Activated CD8-positive, alpha-beta T cell treated with anti-CD3 and anti-CD28 coated beads, Interleukin-2, amount 10 ng/mL, durations not matched to agents 7 days and 5 days (primary cell): ENCODE measurements at regions of chr11 and their contacts with region 1.

Region 1: DNA sequence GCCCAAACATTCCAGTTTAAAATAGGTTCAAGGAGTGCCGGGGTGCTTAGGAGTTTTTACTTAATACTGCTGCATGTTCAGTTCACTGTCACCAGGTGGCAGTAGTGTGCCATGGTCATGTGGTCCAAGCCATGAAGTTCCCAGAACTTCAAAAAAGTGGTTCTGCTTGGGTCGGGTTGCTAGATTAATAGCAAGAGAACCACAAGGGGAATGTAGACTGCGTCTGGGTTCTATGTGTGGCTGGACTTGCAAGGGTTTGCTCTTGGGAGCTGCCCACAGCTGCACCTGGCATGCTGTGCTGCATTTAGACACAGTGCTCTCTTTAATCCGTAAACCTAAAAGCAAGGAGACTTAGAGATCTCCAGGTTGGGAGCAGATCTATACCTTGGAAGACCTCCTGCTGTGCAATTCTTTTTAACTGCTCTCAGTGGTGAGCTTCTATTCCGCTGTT is 6.5 kb upstream of the SPON1 start:
- DNase-seq: peak; percentile 69
- ATAC-seq: peak; percentile 58
- H3K4me3 Mint-ChIP-seq: no peak overlapping the region
- H3K27ac Mint-ChIP-seq: no peak overlapping the region
- H3K4me1 Mint-ChIP-seq: no peaks in the 10 kb centered on the region
- H3K27me3 Mint-ChIP-seq: peaks cover 30% of the 10 kb centered on the region

Region 2: DNA sequence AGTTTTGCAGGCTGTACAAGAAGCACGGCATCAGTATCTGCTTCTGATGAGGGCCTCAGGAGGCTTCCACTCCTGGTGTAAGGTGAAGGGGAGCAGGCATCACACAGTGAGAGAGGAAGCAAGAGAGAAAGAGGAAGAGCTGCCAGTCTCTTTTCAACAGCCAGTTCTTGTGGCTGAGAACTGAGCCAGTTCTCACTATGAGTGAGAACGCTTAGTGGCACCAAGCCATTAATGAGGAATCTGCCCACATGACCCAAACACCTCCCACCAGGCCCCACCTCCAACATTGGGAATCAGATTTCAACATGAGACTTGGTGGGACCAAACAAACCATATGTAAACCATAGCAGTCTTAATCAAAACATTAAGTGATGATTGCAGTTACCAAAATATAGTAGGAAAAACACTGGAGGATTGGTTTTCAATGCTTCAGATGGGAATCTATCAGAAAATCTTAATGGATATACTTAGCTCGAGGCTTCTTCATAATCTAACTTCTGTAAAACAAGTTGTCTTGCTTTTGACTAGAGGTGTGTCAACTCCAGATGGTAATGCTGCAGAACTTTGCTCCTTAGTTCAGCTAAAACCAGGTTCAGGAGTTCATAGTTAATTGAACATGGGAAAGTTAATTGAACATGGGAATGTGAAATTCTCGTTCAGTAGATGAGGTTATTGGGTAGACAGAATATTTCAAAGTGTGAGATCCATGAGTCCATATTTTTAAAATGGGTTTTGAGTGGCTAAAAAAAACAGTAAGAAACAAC is 275.3 kb before region 1 on chr11:
- CTCF ChIA-PET with region 1: no interaction called
- POLR2A ChIA-PET with region 1: no interaction called
- DNase-seq: no peak
- ATAC-seq: no peak
- H3K4me3 Mint-ChIP-seq: no peak overlapping the region
- H3K27ac Mint-ChIP-seq: peak overlapping the region; percentile 12
- H3K4me1 Mint-ChIP-seq: peaks cover 18% of the 10 kb centered on the region
- H3K27me3 Mint-ChIP-seq: no peaks in the 10 kb centered on the region

Region 3: DNA sequence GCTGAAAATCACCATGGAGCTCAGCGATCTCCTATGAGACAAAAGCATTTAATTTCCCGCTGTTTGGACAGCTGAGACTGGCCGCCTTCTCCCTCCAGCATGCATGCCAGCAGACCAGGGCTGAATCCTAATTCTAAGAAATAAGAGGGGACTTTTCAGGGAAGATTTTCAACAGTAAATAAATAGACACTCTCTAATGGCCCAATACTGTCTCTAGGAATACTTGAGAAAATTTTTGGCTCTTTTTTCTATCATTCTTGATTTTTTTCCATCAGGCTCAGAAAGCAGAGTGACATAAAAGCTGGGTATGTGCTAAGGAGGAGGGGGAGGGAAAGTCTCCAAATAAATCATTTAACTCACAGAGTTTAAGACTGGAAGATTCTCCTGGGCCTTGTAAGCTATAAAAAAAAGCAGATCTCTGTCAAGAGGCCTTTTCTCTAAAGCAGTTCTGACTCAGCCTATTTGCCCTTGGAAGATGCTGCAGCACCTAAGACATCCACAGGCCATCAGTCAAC is 11.0 kb before region 1 on chr11:
- CTCF ChIA-PET with region 1: interaction called, 42 read pairs
- POLR2A ChIA-PET with region 1: interaction called, 3 read pairs
- DNase-seq: no peak
- ATAC-seq: no peak
- H3K4me3 Mint-ChIP-seq: no peak overlapping the region
- H3K27ac Mint-ChIP-seq: no peak overlapping the region
- H3K4me1 Mint-ChIP-seq: peaks cover 45% of the 10 kb centered on the region
- H3K27me3 Mint-ChIP-seq: peaks cover 12% of the 10 kb centered on the region

Region 4: DNA sequence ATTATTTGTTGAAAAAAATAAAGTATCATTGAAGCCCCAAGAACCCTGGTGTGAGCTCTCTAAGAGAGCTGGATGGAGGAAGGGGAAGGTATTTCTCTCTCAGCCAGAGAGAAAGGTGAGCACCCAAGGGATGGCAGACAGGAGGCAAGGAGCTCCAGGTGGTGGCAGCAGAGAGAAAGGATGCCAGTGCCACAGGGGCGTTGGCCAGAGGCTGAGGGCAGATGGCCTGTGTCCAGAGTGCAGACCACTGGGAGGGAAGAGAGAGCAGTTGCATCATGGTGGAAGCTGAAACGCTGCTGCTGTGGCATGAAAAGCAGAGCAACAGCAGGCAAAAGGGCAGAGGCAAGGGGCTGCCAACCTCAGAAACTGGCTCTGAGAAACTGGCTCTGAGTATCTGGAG is 15.0 kb after region 1 on chr11:
- CTCF ChIA-PET with region 1: interaction called, 11 read pairs
- POLR2A ChIA-PET with region 1: no interaction called
- DNase-seq: no peak
- ATAC-seq: no peak
- H3K4me3 Mint-ChIP-seq: no peak overlapping the region
- H3K27ac Mint-ChIP-seq: no peak overlapping the region
- H3K4me1 Mint-ChIP-seq: peaks cover 13% of the 10 kb centered on the region
- H3K27me3 Mint-ChIP-seq: peaks cover 25% of the 10 kb centered on the region

Region 5: GRCh38 chr11:14148653-14149273 is 192.8 kb after region 1 on chr11:
- CTCF ChIA-PET with region 1: interaction called, 60 read pairs
- POLR2A ChIA-PET with region 1: no interaction called
- DNase-seq: no peak
- ATAC-seq: peak; percentile 79
- H3K4me3 Mint-ChIP-seq: no peak overlapping the region
- H3K27ac Mint-ChIP-seq: no peak overlapping the region
- H3K4me1 Mint-ChIP-seq: no peaks in the 10 kb centered on the region
- H3K27me3 Mint-ChIP-seq: peaks cover 2% of the 10 kb centered on the region

Region 6: GRCh38 chr11:14249121-14249963 is 293.3 kb after region 1 on chr11:
- CTCF ChIA-PET with region 1: interaction called, 52 read pairs
- POLR2A ChIA-PET with region 1: no interaction called
- DNase-seq: peak; percentile 81
- ATAC-seq: peak; percentile 61
- H3K4me3 Mint-ChIP-seq: peak overlapping the region; percentile 45
- H3K27ac Mint-ChIP-seq: no peak overlapping the region
- H3K4me1 Mint-ChIP-seq: peaks cover 24% of the 10 kb centered on the region
- H3K27me3 Mint-ChIP-seq: peaks cover 8% of the 10 kb centered on the region

Region 7: GRCh38 chr11:14393889-14394288 is 437.9 kb after region 1 on chr11:
- CTCF ChIA-PET with region 1: no interaction called
- POLR2A ChIA-PET with region 1: no interaction called
- DNase-seq: no peak
- ATAC-seq: no peak
- H3K4me3 Mint-ChIP-seq: no peak overlapping the region
- H3K27ac Mint-ChIP-seq: no peak overlapping the region
- H3K4me1 Mint-ChIP-seq: peaks cover 10% of the 10 kb centered on the region
- H3K27me3 Mint-ChIP-seq: peaks cover 13% of the 10 kb centered on the region